Natural killer cell (primary cell): ENCODE measurements at regions of chr1 and their contacts with region 1.

Region 1: GRCh38 chr1:241640029-241640818 is at the starts of genes CHML and OPN3:
- DNase-seq: peak; percentile 87 to 94
- ATAC-seq: peak; percentile 94 to 98 (median 96)
- H3K4me3 ChIP-seq: peak within 1 kb of the TSS; percentile 97
- H3K4me3 Mint-ChIP-seq: peak within 1 kb of the TSS; percentile 82
- H3K27ac ChIP-seq: peak within 1 kb of the TSS; percentile 79
- H3K27ac Mint-ChIP-seq: peak within 1 kb of the TSS; percentile 44 to 61
- H3K4me1 ChIP-seq: peaks cover 5% of the 10 kb centered on the region
- H3K4me1 Mint-ChIP-seq: peaks cover 22 to 31% of the 10 kb centered on the region in 2 donors
- H3K27me3 ChIP-seq: no peaks in the 10 kb centered on the region
- H3K27me3 Mint-ChIP-seq: no peaks in the 10 kb centered on the region
- CTCF ChIP-seq: no peak
- total RNA-seq, gene CHML: 6.8 to 11.8 (median 7.8) TPM
- total RNA-seq, gene OPN3: 3.9 to 5.1 (median 4.1) TPM

Region 2: GRCh38 chr1:241847796-241848685 is 207.8 kb after region 1 on chr1 and contains the start of gene EXO1:
- intact Hi-C with region 1: loop called (anchors 1 kb)
- DNase-seq: peak; percentile 86 to 94
- ATAC-seq: peak; percentile 97
- H3K4me3 ChIP-seq: peak within 1 kb of the TSS; percentile 97
- H3K4me3 Mint-ChIP-seq: peak within 1 kb of the TSS; percentile 99
- H3K27ac ChIP-seq: peak within 1 kb of the TSS; percentile 99
- H3K27ac Mint-ChIP-seq: peak within 1 kb of the TSS; percentile 98 to 99
- H3K4me1 ChIP-seq: peaks cover 7% of the 10 kb centered on the region
- H3K4me1 Mint-ChIP-seq: peaks cover 16% of the 10 kb centered on the region in 2 donors
- H3K27me3 ChIP-seq: no peaks in the 10 kb centered on the region
- H3K27me3 Mint-ChIP-seq: peaks cover 6 to 10% of the 10 kb centered on the region in 2 donors
- CTCF ChIP-seq: peak; percentile 9
- total RNA-seq, gene EXO1: 1.6 to 2.7 (median 1.7) TPM